Stomach (tissue), 19 donors: ENCODE measurements at regions of chr5 and their contacts with region 1.

Region 1: DNA sequence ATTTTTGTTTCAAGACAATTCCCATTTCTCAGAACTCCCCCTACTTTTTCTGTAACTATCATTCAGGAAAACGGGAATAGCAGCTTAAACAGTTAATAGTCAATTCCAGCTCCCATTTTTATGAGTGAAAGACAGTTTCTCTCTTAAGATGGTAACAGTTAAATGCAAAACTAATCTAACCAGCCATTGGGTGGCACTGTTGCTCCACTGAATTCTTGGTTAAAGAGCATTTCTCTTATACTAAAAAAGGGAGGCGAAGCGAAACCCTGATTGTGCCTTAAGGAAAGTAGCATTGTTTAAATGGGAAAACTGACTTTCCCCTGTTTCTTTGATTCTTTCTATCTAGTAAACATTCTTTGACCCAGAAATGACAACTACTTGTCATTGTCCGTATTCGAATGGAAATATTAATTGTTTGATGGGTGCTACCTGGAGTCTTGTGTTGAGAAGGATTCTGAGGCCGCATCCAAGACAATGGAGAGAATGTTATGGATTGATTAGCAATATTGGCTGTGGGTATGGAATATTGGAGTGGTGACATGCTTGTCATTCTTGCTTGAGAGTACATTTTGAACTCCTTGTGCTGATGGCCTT is 507.8 kb downstream of the MAT2B start:
- DNase-seq: peak; percentile 51 to 90
- H3K4me3 ChIP-seq: no peak overlapping the region
- H3K27ac ChIP-seq: no peak overlapping the region
- H3K4me1 ChIP-seq: no peaks in the 10 kb centered on the region
- H3K27me3 ChIP-seq: no peaks in the 10 kb centered on the region
- CTCF ChIP-seq: peak in 4 of 7 experiments; percentile 54 to 72 (median 58)
- EP300 ChIP-seq: no peak
- POLR2A ChIP-seq: no peak

Region 2: DNA sequence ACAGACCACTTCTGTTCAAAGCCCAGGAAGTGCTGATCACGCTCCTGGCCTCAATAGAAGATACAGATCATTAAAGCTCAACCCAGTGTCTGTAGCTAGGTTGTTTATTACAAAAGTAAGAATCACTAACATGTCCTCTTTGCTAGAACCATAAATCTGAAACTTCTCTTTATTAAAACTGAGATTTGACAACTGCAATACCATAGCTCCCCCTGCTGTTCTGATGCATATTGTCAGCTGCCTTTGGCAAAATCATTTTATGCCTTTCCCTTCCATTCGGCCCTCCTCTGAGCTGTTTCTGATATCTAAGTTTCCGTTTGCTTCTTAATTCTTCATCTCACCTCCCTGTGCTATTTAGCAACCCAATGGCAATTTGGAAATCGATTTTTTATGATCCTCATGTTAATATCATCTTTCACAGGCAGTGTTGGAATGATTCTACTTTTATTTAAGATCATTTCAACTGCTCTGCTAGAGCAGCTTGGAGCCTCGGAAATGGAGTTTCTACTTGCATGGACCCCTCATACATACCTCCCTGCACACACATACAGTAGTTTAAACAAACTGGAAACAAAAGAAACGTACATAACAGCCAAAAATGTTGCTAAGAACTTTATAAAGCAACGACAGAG is 491.1 kb after region 1 on chr5:
- intact Hi-C with region 1: loop called (anchors 10 kb)
- DNase-seq: peak; percentile 36 to 83
- H3K4me3 ChIP-seq: no peak overlapping the region
- H3K27ac ChIP-seq: no peak overlapping the region
- H3K4me1 ChIP-seq: peaks cover 0 to 15% (median 8%) of the 10 kb centered on the region in 4 donors
- H3K27me3 ChIP-seq: no peaks in the 10 kb centered on the region
- CTCF ChIP-seq: peak in 5 of 7 experiments; percentile 56 to 84 (median 74)
- EP300 ChIP-seq: no peak
- POLR2A ChIP-seq: no peak

Region 3: DNA sequence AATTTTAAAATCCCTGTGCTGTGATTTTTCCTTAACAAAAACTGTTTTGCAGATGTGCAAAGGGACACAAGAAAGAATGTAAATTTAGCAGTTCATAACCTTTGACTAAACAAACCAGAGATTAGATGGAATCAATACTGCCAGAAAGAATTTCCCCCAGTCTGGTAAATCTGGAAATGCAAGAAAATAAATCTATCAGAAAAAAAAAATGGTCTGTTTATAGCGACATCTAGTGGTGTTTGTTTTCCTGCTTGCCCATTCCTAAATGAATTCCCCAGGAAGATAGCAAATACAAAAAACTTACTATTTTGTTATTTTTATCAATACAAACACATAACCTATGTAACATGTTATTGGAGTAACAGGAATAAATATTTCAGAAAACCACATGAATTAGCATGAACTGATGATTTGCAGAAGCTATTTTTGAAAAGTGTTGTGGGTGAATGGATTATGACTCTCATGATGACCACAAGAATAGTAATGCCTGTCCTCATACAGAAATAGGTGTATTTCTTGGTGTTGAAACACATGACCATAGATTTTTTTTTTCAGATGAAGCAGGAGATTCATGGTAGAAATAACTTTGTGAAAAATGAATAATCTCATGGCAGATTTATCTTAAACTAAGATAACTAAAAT is 1196.0 kb after region 1 on chr5:
- intact Hi-C with region 1: loop called (anchors 10 kb)
- DNase-seq: peak in 1 of 2 donors; percentile 61
- H3K4me3 ChIP-seq: no peak overlapping the region
- H3K27ac ChIP-seq: no peak overlapping the region
- H3K4me1 ChIP-seq: peaks cover 0 to 3% (median 2%) of the 10 kb centered on the region in 4 donors
- H3K27me3 ChIP-seq: no peaks in the 10 kb centered on the region
- CTCF ChIP-seq: peak in 5 of 7 experiments; percentile 8 to 63 (median 54)
- EP300 ChIP-seq: no peak
- POLR2A ChIP-seq: no peak